Posterior vena cava (tissue), 2 donors: ENCODE measurements at regions of chr5 and their contacts with region 1.

Region 1: DNA sequence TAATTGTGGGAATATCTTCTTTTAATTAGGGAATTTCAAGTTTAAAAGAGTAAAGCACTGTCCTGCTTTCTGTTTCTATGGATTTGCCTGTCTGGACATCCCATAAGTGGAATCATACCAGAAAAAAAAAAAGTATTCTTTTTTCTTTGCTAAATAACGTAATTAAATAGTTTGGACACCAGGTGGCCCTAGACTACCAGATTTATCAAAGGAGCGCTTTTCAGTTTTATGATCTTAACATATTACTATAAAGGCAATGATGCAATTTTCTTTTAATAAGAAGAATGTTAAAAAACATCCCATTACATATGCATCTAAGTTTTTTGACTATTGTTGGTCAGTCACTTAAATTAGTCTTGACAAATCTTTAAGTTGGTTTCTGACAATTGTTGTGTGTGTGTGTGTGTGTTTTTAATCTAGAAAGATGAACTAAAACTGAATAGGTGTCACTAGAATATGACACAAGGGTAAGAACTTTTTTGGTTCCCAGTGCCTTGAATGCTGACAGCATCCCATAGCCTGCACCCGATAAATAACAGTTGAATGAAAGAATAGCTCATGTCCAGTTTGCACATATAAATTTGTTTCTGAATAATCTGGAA is 49.5 kb downstream of the C5orf22 start:
- DNase-seq: no peak

Region 2: DNA sequence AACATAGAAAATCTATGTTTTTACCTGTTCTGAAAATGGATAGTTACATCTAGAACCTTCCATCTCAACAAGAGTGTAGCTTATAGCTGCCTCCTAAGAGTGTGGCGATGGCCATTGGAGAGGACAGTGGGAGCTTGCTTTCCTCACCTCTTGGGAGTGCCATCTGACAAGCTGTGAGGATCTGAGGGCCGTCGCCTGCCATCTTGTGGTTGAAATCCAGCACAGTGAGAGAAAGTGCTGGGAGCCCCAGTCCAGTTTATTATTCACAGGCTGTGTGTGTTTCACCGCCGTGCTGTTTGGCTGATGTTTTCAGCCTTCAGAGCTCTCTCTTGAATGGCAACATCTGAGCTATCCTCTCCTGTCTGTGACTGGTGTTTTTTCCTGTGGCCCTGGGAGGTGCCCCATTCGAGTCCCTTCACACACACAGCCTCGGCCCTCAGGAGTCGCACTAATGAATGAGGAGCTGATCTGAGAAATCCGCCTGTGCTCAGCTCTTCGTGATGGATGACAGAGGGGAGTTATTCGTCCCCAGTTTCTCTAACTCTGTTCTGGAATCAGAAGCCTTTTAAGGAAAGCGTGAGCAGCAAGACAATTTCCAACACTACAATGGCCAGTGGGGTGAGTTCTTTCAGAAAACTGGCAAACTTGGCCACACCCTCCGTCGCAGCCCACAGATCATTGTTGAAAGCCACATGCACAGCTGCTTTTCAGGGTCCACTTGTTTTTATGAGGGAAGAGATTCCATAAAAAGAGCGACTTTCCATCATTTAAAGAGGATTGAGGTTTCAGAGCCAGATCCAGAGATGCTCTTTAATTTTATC is 227.7 kb after region 1 on chr5:
- intact Hi-C with region 1: loop called (anchors 5 kb)
- DNase-seq: peak; percentile 87

Region 3: GRCh38 chr5:31972558-31972957 is 391.0 kb after region 1 on chr5:
- intact Hi-C with region 1: no loop called
- DNase-seq: no peak

Region 4: GRCh38 chr5:32096891-32097595 is 515.4 kb after region 1 on chr5:
- intact Hi-C with region 1: loop called in 1 of 2 experiments (anchors 2 kb)
- DNase-seq: no peak

Region 5: GRCh38 chr5:33074548-33074947 is 1492.9 kb after region 1 on chr5:
- intact Hi-C with region 1: no loop called
- DNase-seq: no peak